Dendritic cell treated with granulocyte-macrophage colony-stimulating factor and Interleukin-4, amounts not matched to agents 40 ng/mL and 50 ng/mL, for 4 days (primary cell): ENCODE measurements at regions of chr18 and their contacts with region 1.

Region 1: GRCh38 chr18:54240629-54241107 is 16.2 kb upstream of the MBD2 start:
- H3K4me3 Mint-ChIP-seq: no peak overlapping the region
- H3K27ac Mint-ChIP-seq: peak overlapping the region; percentile 88
- H3K4me1 Mint-ChIP-seq: peaks cover 36% of the 10 kb centered on the region
- H3K27me3 Mint-ChIP-seq: no peaks in the 10 kb centered on the region

Region 2: GRCh38 chr18:54254265-54254770 is 13.7 kb after region 1 on chr18:
- intact Hi-C with region 1: loop called (anchors 1 kb)
- H3K4me3 Mint-ChIP-seq: no peak overlapping the region
- H3K27ac Mint-ChIP-seq: no peak overlapping the region
- H3K4me1 Mint-ChIP-seq: peaks cover 44% of the 10 kb centered on the region
- H3K27me3 Mint-ChIP-seq: no peaks in the 10 kb centered on the region